Dendritic cell treated with granulocyte-macrophage colony-stimulating factor and Interleukin-4, amounts not matched to agents 40 ng/mL and 50 ng/mL, for 4 days (primary cell): ENCODE measurements at regions of chr4 and their contacts with region 1.

Region 1: DNA sequence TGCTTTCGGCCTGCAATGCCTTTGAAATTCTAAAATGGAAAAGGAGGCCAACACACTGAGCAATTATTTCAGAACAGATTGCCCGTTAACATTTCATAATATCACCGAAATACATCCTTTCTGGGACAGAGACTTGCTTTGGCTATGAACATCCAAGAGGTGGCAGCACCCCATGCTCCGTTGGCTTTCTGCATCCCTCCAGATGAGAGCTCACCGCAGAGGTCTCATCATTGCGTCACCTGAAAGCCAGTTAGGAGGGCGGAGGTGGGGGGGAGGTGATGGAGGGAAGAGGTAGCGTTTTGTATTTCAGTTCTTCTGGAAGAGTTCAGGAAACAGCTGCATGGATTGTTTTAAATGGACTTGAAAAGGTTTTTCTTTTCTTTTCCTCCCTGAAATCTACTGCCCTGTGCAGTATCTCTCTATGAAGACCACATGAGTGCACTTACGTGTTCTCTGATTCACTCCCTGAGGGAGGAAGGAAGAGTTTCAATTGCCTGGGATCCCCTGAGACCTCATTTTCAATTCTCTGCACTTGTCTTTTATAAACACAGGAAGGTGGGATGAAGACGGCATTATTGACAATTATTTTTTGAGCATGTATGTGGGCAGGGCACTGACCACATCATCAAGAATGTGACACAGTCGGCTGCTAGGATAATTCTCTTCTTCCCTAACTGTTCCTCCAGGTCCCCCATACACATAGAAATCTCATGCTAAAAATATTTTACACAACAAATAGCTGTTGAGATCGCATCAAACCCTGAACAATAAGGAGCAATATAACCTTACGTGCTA is 166.9 kb upstream of the PGRMC2 start:
- H3K4me3 Mint-ChIP-seq: no peak overlapping the region
- H3K27ac Mint-ChIP-seq: no peak overlapping the region
- H3K4me1 Mint-ChIP-seq: peaks cover 5% of the 10 kb centered on the region
- H3K27me3 Mint-ChIP-seq: no peaks in the 10 kb centered on the region

Region 2: DNA sequence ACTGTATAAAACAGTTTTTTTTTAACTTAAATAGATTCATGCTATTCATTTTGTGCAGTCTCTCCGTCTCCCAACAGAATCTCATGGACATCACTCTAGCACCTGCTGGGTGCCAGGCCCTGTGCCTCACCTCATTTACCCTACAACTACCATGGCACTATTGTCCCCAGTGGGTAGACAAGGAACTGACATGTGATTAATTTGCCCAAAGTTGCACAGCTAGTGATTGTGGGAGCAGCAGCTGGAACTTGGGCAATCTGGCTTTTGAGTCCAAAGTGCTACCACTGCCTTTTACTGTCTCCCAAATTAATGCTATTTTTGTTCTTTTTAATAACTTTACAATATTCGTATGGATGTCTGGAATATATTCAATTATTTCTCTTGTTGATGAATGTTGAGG is 155.6 kb before region 1 on chr4:
- intact Hi-C with region 1: loop called (anchors 10 kb)
- H3K4me3 Mint-ChIP-seq: no peak overlapping the region
- H3K27ac Mint-ChIP-seq: no peak overlapping the region
- H3K4me1 Mint-ChIP-seq: no peaks in the 10 kb centered on the region
- H3K27me3 Mint-ChIP-seq: no peaks in the 10 kb centered on the region

Region 3: DNA sequence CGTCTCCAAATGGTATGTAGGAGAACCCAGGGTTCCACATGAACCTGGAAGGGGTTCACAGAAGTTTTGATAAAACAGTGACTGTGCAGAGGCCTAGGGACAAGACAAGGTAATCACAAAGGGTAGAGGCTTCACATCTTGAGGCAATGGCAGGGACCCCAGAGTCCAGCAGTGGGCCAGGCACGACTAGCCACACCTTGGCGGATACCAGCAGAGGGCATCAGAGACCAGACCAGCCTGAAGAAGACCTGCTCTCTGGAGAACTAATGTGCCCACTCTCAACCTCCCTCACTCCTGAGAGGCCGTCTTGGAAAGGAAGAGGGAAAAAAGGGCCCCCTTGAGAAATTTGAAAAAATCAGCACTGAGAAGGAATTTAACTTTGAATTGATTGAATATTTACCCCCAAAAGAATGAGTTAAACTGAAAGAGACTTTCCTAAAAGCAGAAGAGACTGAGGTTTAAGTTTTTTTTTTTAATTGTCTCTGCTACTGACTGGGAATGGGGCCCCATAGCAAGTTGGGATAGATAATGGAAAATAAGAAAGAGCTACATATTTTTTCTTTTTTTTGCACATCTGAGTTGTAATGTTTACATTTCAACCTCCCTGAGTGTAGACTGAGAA is 111.2 kb after region 1 on chr4:
- intact Hi-C with region 1: loop called (anchors 5 kb)
- H3K4me3 Mint-ChIP-seq: no peak overlapping the region
- H3K27ac Mint-ChIP-seq: peak overlapping the region; percentile 55
- H3K4me1 Mint-ChIP-seq: peaks cover 73% of the 10 kb centered on the region
- H3K27me3 Mint-ChIP-seq: no peaks in the 10 kb centered on the region

Region 4: GRCh38 chr4:128809477-128810330 is 355.2 kb after region 1 on chr4 and contains the start of gene JADE1:
- intact Hi-C with region 1: loop called (anchors 1 kb)
- H3K4me3 Mint-ChIP-seq: peak within 1 kb of the TSS; percentile 89
- H3K27ac Mint-ChIP-seq: peak within 1 kb of the TSS; percentile 92
- H3K4me1 Mint-ChIP-seq: peaks cover 9% of the 10 kb centered on the region
- H3K27me3 Mint-ChIP-seq: peaks cover 3% of the 10 kb centered on the region

Region 5: GRCh38 chr4:128863312-128864075 is 409.0 kb after region 1 on chr4:
- intact Hi-C with region 1: loop called (anchors 5 kb)
- H3K4me3 Mint-ChIP-seq: no peak overlapping the region
- H3K27ac Mint-ChIP-seq: no peak overlapping the region
- H3K4me1 Mint-ChIP-seq: peaks cover 28% of the 10 kb centered on the region
- H3K27me3 Mint-ChIP-seq: no peaks in the 10 kb centered on the region